ENCODE measurements at regions of chr4 and their contacts with region 1.

Region 1: DNA sequence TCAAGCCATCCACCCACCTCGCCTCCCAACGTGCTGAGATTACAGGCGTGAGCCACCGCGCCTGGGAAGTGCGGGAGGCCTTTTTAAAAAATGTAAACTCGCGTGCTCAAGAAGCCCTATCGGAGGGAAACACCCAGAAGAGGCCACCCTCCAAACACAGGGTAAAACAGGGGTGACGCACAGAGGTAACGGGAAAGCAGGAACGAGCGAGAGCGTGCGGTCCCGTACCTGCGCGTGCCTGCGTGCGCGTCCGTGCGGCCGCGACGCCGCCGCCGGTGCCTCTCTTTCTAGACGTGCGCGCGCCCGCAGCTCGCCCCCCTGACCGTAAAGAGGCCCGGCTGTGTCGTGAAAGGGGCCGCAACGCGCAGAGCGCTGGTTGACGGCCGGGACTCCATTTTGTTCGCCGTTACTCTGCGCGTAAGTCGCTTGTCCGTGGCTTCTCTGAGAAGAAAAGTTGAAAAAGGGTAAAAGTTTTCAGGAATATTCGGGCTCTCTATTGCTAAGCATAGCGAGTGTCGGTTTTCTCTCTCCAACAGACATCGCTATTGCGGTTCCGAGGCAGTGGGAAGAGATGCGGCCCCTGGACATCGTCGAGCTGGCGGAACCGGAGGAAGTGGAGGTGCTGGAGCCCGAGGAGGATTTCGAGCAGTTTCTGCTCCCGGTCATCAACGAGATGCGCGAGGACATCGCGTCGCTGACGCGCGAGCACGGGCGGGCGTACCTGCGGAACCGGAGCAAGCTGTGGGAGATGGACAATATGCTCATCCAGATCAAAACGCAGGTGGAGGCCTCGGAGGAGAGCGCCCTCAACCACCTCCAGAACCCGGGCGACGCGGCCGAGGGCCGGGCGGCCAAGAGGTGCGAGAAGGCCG is at the start of gene MRFAP1:
- DNase-seq: peak; percentile 96
- H3K4me3 ChIP-seq: peak within 1 kb of the TSS; percentile 71 to 85 (median 84)
- H3K27ac ChIP-seq: peak within 1 kb of the TSS; percentile 93 to 96 (median 95)
- H3K4me1 ChIP-seq: peaks cover 0 to 36% (median 30%) of the 10 kb centered on the region in 4 donors
- H3K27me3 ChIP-seq: no peaks in the 10 kb centered on the region
- CTCF ChIP-seq: no peak
- EP300 ChIP-seq: peak in 1 of 4 donors; percentile 53
- POLR2A ChIP-seq: peak; percentile 92 to 93
- total RNA-seq, gene MRFAP1: 196 to 226 (median 211) TPM

Region 2: GRCh38 chr4:6574747-6575502 is 65.6 kb before region 1 on chr4 and contains the start of gene MAN2B2:
- intact Hi-C with region 1: loop called (anchors 2 kb)
- DNase-seq: peak; percentile 93
- H3K4me3 ChIP-seq: peak within 1 kb of the TSS; percentile 71 to 93 (median 86)
- H3K27ac ChIP-seq: peak within 1 kb of the TSS; percentile 74 to 81 (median 76)
- H3K4me1 ChIP-seq: peaks cover 0 to 24% (median 17%) of the 10 kb centered on the region in 4 donors
- H3K27me3 ChIP-seq: no peaks in the 10 kb centered on the region
- CTCF ChIP-seq: no peak
- EP300 ChIP-seq: no peak
- POLR2A ChIP-seq: peak in 1 of 2 donors; percentile 32
- total RNA-seq, gene MAN2B2: 12.7 to 24.3 (median 20.2) TPM

Region 3: DNA sequence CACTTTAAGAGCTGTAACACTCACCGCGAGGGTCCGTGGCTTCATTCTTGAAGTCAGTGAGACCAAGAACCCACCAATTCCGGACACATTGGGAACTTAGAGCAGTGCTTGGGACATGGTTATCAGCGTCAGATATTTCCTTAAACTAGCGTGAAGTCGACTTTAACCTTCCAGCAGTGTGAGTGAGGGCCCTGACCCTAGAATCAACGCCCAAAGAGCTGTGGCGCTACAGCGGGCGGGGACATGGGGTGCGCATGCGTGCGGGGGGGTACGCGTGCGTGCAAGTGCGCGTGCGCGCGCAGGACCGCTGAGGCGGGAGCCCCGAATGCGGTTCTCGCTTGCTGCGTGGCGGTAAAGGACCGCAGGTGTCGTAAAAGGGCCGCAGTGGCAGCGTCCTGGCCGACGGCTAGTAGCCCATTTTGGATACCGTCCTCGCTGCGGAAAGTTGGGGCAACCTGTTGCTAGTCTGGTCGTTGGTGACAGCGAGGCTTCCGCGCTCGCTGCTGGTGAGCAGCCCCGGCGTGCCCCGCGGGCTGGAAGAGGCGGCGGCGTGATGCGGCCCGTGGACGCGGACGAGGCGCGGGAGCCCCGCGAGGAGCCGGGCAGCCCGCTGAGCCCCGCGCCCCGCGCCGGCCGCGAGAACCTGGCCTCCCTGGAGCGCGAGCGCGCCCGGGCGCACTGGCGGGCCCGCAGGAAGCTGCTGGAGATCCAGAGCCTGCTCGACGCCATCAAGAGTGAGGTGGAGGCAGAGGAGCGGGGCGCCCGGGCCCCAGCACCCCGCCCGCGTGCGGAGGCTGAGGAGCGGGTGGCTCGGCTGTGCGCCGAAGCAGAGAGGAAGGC is 33.4 kb after region 1 on chr4:
- intact Hi-C with region 1: loop called (anchors 1 kb)
- DNase-seq: peak; percentile 98
- H3K4me3 ChIP-seq: peak overlapping the region; percentile 72 to 79 (median 74)
- H3K27ac ChIP-seq: peak overlapping the region; percentile 83 to 93 (median 88)
- H3K4me1 ChIP-seq: peaks cover 0 to 37% (median 37%) of the 10 kb centered on the region in 4 donors
- H3K27me3 ChIP-seq: no peaks in the 10 kb centered on the region
- CTCF ChIP-seq: no peak
- EP300 ChIP-seq: no peak
- POLR2A ChIP-seq: peak in 1 of 2 donors; percentile 54

Region 4: DNA sequence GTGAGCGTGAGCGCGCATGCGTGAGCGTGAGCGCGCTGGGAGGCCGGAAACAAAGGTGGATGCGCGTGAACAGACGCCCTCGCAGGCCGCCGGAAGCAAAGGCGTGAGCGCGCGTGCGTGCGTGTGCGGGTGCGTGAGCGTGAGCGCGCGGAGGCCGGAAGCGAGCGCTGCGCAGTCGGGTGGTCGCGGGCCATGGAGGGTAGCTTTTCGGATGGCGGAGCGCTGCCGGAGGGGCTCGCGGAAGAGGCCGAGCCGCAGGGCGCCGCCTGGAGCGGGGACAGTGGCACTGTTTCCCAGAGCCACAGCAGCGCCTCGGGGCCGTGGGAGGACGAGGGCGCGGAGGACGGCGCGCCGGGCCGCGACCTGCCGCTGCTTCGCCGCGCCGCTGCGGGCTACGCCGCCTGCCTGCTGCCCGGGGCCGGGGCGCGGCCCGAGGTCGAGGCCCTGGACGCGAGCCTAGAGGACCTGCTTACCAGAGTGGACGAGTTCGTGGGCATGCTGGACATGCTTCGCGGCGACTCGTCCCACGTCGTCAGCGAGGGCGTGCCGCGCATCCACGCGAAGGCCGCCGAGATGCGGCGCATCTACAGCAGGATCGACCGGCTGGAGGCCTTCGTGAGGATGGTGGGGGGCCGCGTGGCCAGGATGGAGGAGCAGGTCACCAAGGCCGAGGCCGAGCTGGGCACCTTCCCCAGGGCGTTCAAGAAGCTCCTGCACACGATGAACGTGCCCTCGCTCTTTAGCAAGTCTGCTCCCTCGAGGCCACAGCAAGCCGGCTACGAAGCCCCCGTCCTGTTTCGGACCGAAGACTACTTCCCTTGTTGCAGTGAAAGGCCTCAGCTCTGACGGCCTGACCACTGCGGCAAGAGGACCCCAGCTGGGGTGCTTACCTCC is 75.7 kb after region 1 on chr4 and contains the start of gene BLOC1S4:
- intact Hi-C with region 1: loop called (anchors 2 kb)
- DNase-seq: peak; percentile 94
- H3K4me3 ChIP-seq: peak within 1 kb of the TSS; percentile 61 to 81 (median 70)
- H3K27ac ChIP-seq: peak within 1 kb of the TSS; percentile 88 to 94 (median 92)
- H3K4me1 ChIP-seq: peaks cover 0 to 34% (median 28%) of the 10 kb centered on the region in 4 donors
- H3K27me3 ChIP-seq: no peaks in the 10 kb centered on the region
- CTCF ChIP-seq: no peak
- EP300 ChIP-seq: no peak
- POLR2A ChIP-seq: peak; percentile 47 to 67
- total RNA-seq, gene BLOC1S4: 9.1 to 19.7 (median 14.6) TPM

Measured in sigmoid colon (tissue), 7 donors.